GM18951 (cell line): ENCODE measurements at regions of chr14 and their contacts with region 1.

Region 1: DNA sequence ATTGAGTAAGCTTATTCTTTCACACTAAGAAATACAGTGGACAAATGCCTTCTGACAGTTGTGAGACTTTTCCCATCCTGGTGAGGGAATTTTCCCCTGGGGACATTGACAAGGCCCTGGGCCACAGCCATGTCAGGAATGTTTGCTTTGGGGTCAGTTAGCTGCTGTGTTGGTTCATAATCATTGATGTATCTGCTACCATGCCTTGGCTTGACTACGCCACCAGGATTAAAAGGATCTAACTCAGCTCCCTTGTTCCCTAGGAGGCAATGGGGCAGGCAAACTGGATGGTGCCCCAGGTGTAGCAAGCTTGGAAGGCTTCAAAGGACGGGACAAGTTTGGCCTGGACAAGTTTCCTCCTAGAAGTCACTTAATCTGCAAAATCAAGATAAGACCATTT is 3.1 kb upstream of the CCDC88C start:
- POLR2A ChIP-seq: no peak

Region 2: GRCh38 chr14:91317381-91318308 is 103.0 kb before region 1 on chr14:
- in situ Hi-C with region 1: loop called (anchors 10 kb)
- POLR2A ChIP-seq: no peak

Region 3: GRCh38 chr14:91606851-91607250 is 186.2 kb after region 1 on chr14:
- in situ Hi-C with region 1: no loop called
- POLR2A ChIP-seq: no peak

Region 4: DNA sequence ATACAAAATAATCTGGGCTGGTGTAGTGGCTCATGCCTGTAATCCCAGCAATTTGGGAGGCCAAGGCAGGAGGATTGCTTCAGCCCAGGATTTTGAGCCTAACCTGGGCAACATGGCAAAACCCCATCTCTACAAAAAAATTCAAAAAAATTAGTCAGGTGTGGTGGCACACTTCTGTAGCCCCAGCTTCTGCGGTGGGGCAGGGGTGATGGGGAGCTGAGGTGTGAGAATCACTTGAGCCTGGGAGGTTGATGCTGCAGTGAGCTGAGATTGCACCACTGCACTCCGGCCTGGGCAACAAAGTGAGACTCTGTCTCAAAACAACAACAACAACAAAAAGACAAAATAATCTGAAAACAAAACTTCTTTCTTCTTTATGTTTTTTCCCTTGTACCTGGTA is 380.7 kb after region 1 on chr14:
- in situ Hi-C with region 1: no loop called
- POLR2A ChIP-seq: no peak